Posterior cingulate gyrus (tissue), 11 donors: ENCODE measurements at regions of chr15 and their contacts with region 1.

Region 1: GRCh38 chr15:61834076-61834697 is 226.1 kb downstream of the VPS13C start:
- DNase-seq: peak; percentile 66 to 98 (median 90)

Region 2: GRCh38 chr15:60585743-60586708 is 1248.2 kb before region 1 on chr15:
- intact Hi-C with region 1: loop called (anchors 2 kb)
- DNase-seq: peak in 5 of 10 donors; percentile 42 to 85 (median 50)

Region 3: GRCh38 chr15:61195116-61196002 is 638.8 kb before region 1 on chr15:
- intact Hi-C with region 1: loop called (anchors 10 kb)
- DNase-seq: no peak

Region 4: GRCh38 chr15:61541516-61541915 is 292.7 kb before region 1 on chr15:
- intact Hi-C with region 1: no loop called
- DNase-seq: no peak

Region 5: GRCh38 chr15:62035256-62035908 is 201.2 kb after region 1 on chr15:
- intact Hi-C with region 1: no loop called
- DNase-seq: no peak